GM10248 (cell line): ENCODE measurements at regions of chr16 and their contacts with region 1.

Region 1: GRCh38 chr16:9885467-9885866 is 296.8 kb downstream of the GRIN2A start:
- DNase-seq: no peak
- CTCF ChIP-seq: no peak

Region 2: GRCh38 chr16:9556949-9557665 is 328.4 kb before region 1 on chr16:
- CTCF ChIA-PET with region 1: no interaction called
- POLR2A ChIA-PET with region 1: no interaction called
- DNase-seq: no peak
- CTCF ChIP-seq: no peak

Region 3: GRCh38 chr16:9862327-9862726 is 23.1 kb before region 1 on chr16:
- CTCF ChIA-PET with region 1: no interaction called
- POLR2A ChIA-PET with region 1: no interaction called
- DNase-seq: no peak
- CTCF ChIP-seq: no peak

Region 4: DNA sequence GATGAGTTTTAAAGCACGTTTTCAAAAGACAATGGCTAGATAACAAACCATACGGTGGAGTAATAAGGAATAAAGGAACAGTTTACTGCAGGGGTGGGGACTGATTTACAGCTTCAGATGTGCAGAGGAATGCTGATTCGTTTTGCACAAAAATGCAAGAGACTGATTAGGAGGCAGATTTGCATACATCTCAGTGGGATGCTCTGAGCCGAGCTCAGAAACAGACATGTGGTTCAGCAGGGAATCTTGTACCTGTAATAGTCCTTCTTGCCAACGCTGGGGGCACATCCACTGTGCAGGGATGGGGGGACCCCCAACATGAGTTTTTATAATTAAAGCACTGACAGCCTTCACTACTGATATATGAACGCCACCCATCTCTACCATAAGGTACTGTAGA is 11.2 kb before region 1 on chr16:
- CTCF ChIA-PET with region 1: interaction called, 13 read pairs
- POLR2A ChIA-PET with region 1: no interaction called
- DNase-seq: no peak
- CTCF ChIP-seq: no peak

Region 5: GRCh38 chr16:9908613-9909012 is 23.1 kb after region 1 on chr16:
- CTCF ChIA-PET with region 1: no interaction called
- POLR2A ChIA-PET with region 1: no interaction called
- DNase-seq: no peak
- CTCF ChIP-seq: no peak